ENCODE measurements at regions of chr4 and their contacts with region 1.

Region 1: GRCh38 chr4:53015681-53016080 is 153.6 kb downstream of the RASL11B start:
- DNase-seq: peak; percentile 51

Region 2: DNA sequence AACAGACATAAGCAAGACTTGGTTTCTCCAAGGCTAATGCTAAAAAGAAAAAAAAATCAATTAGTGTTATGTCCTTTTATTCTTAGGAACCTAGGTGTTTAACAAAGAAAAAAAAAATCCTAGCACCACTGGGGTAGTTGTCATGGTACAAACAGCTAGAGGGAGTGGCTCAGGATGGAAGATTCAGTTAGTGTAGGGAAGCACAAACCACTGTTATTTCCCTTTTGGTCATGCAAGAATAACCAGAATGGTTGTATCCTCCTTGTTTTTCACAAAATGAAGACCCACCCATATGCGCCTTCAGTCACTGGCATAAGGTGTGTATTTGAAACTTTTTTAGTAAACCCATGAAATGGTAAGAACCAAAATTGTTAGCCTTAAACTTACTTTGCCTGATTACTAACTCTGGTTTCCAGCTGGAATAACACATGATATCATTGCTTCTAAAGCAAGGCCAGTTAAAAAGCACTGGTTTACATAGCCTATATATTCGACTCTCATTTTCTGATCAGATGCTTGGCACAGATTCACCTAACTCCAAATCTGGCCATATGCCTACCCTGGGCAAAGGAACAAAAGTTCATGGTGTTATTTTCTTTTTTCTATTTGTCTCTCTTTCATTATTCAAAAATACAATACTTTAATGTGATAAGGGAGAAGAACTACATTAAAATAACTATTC is 217.6 kb after region 1 on chr4:
- in situ Hi-C with region 1: no loop called
- DNase-seq: peak; percentile 62

Region 3: GRCh38 chr4:53899586-53900270 is 884.0 kb after region 1 on chr4:
- in situ Hi-C with region 1: loop called (anchors 25 kb)
- DNase-seq: no peak

Region 4: DNA sequence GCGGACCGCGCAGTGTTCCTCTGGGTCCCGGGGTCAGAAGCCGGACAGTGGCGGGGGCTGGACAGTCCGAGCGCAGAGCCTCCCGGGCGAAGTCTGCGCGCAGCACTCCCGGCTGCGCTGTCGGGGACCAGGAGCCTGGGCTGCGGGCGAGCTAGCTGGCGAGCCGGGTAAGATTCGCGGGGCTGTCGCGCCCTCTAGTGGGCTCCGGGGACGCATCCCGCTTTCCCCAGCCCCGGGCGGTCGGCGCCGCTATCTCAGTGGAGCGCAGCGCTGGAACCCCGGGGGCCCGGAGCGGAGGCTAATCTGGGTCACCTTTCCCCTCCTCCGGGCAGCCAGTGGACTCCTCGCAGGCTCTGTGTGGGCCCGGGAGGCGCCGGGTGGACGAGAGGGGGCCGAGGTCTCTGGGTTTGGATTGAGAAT is 1217.6 kb after region 1 on chr4:
- in situ Hi-C with region 1: loop called (anchors 25 kb)
- DNase-seq: peak; percentile 88

Measured in KBM-7 (cell line).